Sigmoid colon (tissue), 7 donors: ENCODE measurements at regions of chr10 and their contacts with region 1.

Region 1: DNA sequence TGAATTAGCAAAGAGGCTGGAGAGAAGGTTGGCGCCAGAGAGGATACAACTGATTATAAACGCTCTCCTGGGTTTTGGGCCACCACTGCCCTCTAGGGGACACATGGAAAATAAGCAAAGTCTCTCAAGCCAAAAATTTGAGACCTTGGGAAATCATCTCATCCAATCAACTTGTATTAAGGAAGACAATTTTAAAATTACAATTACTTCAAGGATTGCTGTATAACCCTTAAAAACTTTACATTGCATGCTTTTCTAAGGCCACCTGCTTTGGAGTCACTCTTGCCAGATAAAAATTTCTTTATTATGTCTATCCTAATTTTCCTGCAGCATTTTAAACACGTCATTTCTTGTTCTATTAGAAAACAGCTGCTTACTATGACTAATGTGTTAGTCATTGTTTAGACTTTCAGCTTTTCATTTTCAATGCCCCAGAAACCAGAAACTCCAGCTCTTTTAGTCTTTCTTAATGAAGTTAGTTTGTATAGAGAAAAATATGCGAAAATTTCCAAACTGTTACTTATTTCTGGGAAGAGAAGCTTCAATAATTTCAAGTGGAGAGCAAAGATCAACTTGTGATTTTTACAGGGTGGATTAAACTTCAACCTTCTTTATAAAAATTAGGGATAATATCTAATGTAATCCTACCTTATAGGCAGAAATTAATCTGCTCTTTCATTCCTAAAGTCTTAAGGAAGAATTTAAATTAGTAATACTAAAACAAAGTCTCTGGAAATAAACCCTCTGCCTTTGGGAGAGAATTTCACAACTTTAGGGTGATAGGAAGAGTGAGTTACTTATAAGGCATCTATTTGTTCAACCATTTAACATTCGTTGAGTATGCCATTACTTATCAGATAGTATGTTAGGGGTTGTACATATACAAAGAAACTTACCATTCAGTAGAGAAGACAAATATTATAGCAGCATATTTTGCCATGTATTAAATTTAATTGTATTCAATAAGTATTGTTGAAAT is 20.6 kb upstream of the RHOBTB1 start:
- DNase-seq: peak; percentile 91
- H3K4me3 ChIP-seq: no peak overlapping the region
- H3K27ac ChIP-seq: peak overlapping the region; percentile 32 to 54 (median 49)
- H3K4me1 ChIP-seq: peaks cover 0 to 13% (median 3%) of the 10 kb centered on the region in 4 donors
- H3K27me3 ChIP-seq: no peaks in the 10 kb centered on the region
- CTCF ChIP-seq: peak; percentile 40 to 81 (median 64)
- EP300 ChIP-seq: no peak
- POLR2A ChIP-seq: no peak

Region 2: DNA sequence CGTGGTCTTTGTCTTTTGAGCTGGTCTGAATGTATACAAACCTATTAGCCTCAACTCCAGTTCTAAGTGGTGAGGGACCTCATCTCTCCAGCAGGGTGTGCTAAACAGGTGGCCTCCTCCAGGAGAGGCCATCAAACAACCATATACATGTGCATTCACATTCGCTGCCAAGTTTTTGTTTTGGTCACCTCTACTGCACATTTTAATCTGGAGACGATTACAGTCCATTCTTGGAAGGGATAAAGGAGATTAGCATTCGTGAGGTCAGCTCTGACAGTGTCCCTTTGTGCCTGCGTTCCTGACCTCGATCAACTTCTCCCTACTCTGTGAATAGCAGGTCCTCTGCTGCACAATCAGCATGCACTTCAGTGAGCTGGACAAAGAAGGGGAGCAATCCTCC is 81.4 kb before region 1 on chr10:
- intact Hi-C with region 1: loop called (anchors 5 kb)
- DNase-seq: no peak
- H3K4me3 ChIP-seq: no peak overlapping the region
- H3K27ac ChIP-seq: no peak overlapping the region
- H3K4me1 ChIP-seq: peaks cover 0 to 4% (median 0%) of the 10 kb centered on the region in 4 donors
- H3K27me3 ChIP-seq: no peaks in the 10 kb centered on the region
- CTCF ChIP-seq: peak in 3 of 4 experiments; percentile 22 to 52 (median 28)
- EP300 ChIP-seq: no peak
- POLR2A ChIP-seq: no peak